ENCODE measurements at regions of chr19 and their contacts with region 1.

Region 1: GRCh38 chr19:18203863-18204393 is at the start of gene RAB3A:
- DNase-seq: peak; percentile 100
- H3K4me3 ChIP-seq: peak within 1 kb of the TSS; percentile 46 to 81 (median 75)
- H3K27ac ChIP-seq: peak within 1 kb of the TSS; percentile 88
- H3K4me1 ChIP-seq: peaks cover 10% of the 10 kb centered on the region
- H3K27me3 ChIP-seq: peaks cover 0 to 2% of the 10 kb centered on the region in 2 experiments
- CTCF ChIP-seq: no peak
- POLR2A ChIP-seq: no peak
- total RNA-seq, gene RAB3A: 0.88 and 1.9 TPM in 2 replicates

Region 2: GRCh38 chr19:18152444-18152816 is 51.5 kb before region 1 on chr19:
- CTCF ChIA-PET with region 1: interaction called, 5 read pairs
- POLR2A ChIA-PET with region 1: no interaction called
- dilution Hi-C with region 1: no loop called
- intact Hi-C with region 1: loop called (anchors 2 kb)
- DNase-seq: peak; percentile 97
- H3K4me3 ChIP-seq: peak overlapping the region in 2 of 3 experiments; percentile 38 to 68
- H3K27ac ChIP-seq: peak overlapping the region; percentile 88
- H3K4me1 ChIP-seq: peaks cover 21% of the 10 kb centered on the region
- H3K27me3 ChIP-seq: no peaks in the 10 kb centered on the region
- CTCF ChIP-seq: peak; percentile 70 to 83
- POLR2A ChIP-seq: peak; percentile 84

Region 3: DNA sequence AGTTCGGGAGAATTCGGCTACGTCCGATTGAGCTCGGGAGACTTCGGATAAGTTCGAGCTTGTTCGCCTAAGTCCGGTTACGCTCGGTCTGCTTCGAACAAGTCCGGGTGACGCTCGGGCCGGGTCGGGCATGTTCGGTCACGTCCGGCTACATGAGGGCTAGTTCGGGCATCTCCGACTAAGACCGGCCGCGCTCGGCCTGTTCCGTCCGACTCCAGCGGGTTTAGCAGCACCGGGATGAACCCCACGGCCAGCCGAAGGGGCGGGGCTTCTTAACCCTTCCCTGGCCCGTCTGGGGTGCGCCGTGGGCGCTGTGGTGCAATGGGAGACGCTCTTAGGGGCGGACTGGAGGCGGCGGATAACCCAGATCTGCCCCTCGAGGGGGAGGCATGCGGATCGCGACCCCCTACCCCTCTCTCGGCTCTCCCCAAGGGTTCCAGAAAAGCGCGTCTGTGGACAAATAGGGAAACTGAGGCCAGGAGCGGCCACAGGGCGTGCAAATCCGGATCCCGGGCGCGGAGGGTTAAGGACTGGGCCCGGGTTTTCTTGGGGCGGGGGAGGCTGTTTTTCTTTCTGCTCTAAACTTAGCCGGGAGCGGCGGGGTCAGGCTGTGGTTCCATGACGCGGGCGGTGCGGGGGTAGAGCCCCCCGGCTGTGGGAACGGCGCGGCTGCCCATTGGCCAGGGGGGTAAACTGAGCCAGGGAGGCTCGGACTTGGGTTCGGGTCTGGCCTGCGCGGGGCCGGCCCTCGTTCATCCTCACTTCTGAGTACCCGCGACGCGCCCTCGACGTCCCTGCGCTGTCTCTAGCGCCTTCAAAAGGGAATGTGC is 20.8 kb after region 1 on chr19:
- CTCF ChIA-PET with region 1: interaction called, 18 read pairs
- POLR2A ChIA-PET with region 1: no interaction called
- dilution Hi-C with region 1: no loop called
- intact Hi-C with region 1: no loop called
- DNase-seq: peak; percentile 99
- H3K4me3 ChIP-seq: peak overlapping the region in 1 of 3 experiments; percentile 4
- H3K27ac ChIP-seq: no peak overlapping the region
- H3K4me1 ChIP-seq: peaks cover 9% of the 10 kb centered on the region
- H3K27me3 ChIP-seq: peaks cover 5% of the 10 kb centered on the region in 2 experiments
- CTCF ChIP-seq: no peak
- POLR2A ChIP-seq: no peak

Region 4: DNA sequence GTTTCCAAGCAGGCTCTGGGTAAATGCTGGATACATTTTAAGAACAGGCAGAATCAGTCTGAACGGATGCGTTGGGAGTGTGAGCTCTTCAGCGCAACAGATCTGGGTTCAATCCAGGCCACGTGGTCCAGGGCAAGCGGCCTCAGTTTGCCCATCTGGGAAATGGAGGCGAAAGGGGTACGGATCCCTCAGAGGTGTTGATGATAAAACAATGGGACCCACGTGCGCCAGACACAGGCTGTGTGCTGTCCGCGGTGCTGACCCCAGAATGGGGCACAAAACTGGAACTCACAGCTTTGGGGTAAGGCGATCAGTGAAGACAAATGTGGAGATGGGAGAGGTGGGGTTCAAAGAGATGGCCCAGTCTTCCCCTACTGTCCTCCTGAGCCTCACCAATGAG is 35.4 kb after region 1 on chr19:
- CTCF ChIA-PET with region 1: interaction called, 20 read pairs
- POLR2A ChIA-PET with region 1: no interaction called
- dilution Hi-C with region 1: no loop called
- intact Hi-C with region 1: no loop called
- DNase-seq: no peak
- H3K4me3 ChIP-seq: no peak overlapping the region
- H3K27ac ChIP-seq: no peak overlapping the region
- H3K4me1 ChIP-seq: no peaks in the 10 kb centered on the region
- H3K27me3 ChIP-seq: no peaks in the 10 kb centered on the region
- CTCF ChIP-seq: no peak
- POLR2A ChIP-seq: no peak

Region 5: GRCh38 chr19:18322759-18323460 is 119.0 kb after region 1 on chr19 and contains the start of gene LSM4:
- CTCF ChIA-PET with region 1: interaction called, 12 read pairs
- POLR2A ChIA-PET with region 1: no interaction called
- dilution Hi-C with region 1: no loop called
- intact Hi-C with region 1: loop called (anchors 1 kb)
- DNase-seq: peak; percentile 98
- H3K4me3 ChIP-seq: peak within 1 kb of the TSS; percentile 43 to 76 (median 71)
- H3K27ac ChIP-seq: peak within 1 kb of the TSS; percentile 73
- H3K4me1 ChIP-seq: peaks cover 50% of the 10 kb centered on the region
- H3K27me3 ChIP-seq: no peaks in the 10 kb centered on the region
- CTCF ChIP-seq: peak; percentile 5 to 38
- POLR2A ChIP-seq: no peak
- total RNA-seq, gene LSM4: 103 and 118 TPM in 2 replicates